ENCODE measurements at regions of chr4 and their contacts with region 1.

Region 1: DNA sequence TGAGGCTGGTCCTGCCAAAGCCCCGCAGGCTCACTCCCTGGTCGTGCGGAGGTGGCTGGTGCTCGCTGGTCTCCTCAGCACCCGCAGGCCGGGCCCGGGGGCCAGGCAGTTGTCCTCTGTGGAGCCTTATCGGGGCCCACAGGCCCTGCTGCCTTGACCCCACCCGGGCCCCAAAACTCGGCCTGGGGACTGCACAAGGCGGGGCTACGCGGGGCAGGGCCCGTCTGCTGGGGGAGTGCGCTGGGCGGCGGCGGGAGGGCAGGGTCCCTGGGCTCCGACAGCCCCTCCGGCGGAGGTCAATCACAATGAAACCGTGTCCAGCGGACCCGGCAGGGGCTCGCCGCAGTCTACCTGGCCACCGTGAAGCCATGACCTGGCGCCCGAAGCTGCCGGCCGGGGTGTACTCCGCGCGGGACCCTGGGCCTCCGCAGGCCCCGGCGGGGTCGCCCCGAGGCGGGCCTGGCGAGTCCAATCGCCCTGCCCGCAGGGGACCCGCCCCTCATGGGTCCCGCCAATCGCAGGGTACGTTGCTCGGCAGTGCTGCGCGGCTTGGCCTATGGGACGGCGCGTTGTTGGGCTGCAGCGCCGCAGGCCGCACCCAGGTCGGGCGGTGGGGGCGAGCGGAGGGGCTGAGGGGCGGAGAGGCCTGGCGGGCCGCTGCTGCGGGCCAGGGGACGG is at the start of gene ADD1:
- DNase-seq: peak; percentile 97
- H3K4me3 Mint-ChIP-seq: peak within 1 kb of the TSS; percentile 89
- H3K27ac Mint-ChIP-seq: peak within 1 kb of the TSS; percentile 82
- H3K4me1 Mint-ChIP-seq: peaks cover 51% of the 10 kb centered on the region
- H3K27me3 Mint-ChIP-seq: no peaks in the 10 kb centered on the region
- total RNA-seq, gene ADD1: 212 TPM

Region 2: GRCh38 chr4:2798399-2799223 is 44.8 kb before region 1 on chr4:
- CTCF ChIA-PET with region 1: no interaction called
- POLR2A ChIA-PET with region 1: interaction called, 3 read pairs
- intact Hi-C with region 1: loop called (anchors 5 kb)
- DNase-seq: peak; percentile 78
- H3K4me3 Mint-ChIP-seq: peak overlapping the region; percentile 73
- H3K27ac Mint-ChIP-seq: peak overlapping the region; percentile 83
- H3K4me1 Mint-ChIP-seq: peaks cover 61% of the 10 kb centered on the region
- H3K27me3 Mint-ChIP-seq: no peaks in the 10 kb centered on the region

Region 3: DNA sequence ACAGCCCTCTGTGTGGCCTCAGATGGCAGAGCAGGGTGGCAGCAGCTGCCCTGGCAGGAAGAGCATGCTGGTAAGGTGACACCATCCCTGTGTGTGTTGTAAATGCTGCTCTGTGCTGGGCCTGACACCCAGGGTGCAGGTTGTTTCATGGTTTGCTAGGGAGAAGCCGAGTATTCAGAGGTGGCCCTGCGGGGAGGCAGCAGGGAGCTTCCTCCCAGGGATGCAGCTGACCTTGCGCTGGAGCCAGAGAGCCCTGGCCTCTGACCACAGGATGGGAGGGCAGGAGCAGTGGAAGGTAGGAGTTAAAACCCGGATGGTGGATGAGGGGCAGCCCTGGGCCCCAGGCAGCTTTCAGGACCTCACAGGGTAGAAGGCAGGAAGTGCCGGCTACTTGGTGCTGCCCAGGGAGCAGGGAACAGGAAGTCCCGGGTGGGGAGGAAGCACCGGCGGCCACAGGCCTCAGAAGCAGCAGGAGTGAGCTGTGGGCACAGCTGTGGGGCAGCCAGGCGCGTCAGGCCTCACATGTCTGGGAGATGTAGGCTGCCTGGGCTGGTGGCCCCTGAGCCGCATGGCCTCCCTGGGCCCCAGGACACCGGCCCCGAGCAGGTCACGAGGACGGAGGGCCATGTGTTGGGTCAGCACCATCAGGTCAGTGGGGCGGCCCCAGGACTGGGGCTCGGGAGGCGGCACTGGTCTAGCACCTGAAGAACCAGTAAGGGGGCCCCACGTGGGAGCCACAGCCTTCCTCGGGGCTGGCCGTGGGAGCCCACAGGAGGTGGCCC is 31.4 kb before region 1 on chr4:
- CTCF ChIA-PET with region 1: interaction called, 3 read pairs
- POLR2A ChIA-PET with region 1: no interaction called
- intact Hi-C with region 1: loop called (anchors 2 kb)
- DNase-seq: peak; percentile 81
- H3K4me3 Mint-ChIP-seq: peak overlapping the region; percentile 79
- H3K27ac Mint-ChIP-seq: peak overlapping the region; percentile 95
- H3K4me1 Mint-ChIP-seq: peaks cover 48% of the 10 kb centered on the region
- H3K27me3 Mint-ChIP-seq: no peaks in the 10 kb centered on the region

Region 4: GRCh38 chr4:2878346-2878745 is 34.9 kb after region 1 on chr4:
- CTCF ChIA-PET with region 1: no interaction called
- POLR2A ChIA-PET with region 1: interaction called, 6 read pairs
- intact Hi-C with region 1: loop called (anchors 1 kb)
- DNase-seq: peak; percentile 67
- H3K4me3 Mint-ChIP-seq: no peak overlapping the region
- H3K27ac Mint-ChIP-seq: peak overlapping the region; percentile 76
- H3K4me1 Mint-ChIP-seq: peaks cover 35% of the 10 kb centered on the region
- H3K27me3 Mint-ChIP-seq: no peaks in the 10 kb centered on the region

Region 5: GRCh38 chr4:2934813-2935761 is 91.7 kb after region 1 on chr4:
- CTCF ChIA-PET with region 1: no interaction called
- POLR2A ChIA-PET with region 1: interaction called, 23 read pairs
- intact Hi-C with region 1: loop called (anchors 2 kb)
- DNase-seq: peak; percentile 97
- H3K4me3 Mint-ChIP-seq: peak overlapping the region; percentile 93
- H3K27ac Mint-ChIP-seq: peak overlapping the region; percentile 95
- H3K4me1 Mint-ChIP-seq: peaks cover 53% of the 10 kb centered on the region
- H3K27me3 Mint-ChIP-seq: no peaks in the 10 kb centered on the region

Region 6: DNA sequence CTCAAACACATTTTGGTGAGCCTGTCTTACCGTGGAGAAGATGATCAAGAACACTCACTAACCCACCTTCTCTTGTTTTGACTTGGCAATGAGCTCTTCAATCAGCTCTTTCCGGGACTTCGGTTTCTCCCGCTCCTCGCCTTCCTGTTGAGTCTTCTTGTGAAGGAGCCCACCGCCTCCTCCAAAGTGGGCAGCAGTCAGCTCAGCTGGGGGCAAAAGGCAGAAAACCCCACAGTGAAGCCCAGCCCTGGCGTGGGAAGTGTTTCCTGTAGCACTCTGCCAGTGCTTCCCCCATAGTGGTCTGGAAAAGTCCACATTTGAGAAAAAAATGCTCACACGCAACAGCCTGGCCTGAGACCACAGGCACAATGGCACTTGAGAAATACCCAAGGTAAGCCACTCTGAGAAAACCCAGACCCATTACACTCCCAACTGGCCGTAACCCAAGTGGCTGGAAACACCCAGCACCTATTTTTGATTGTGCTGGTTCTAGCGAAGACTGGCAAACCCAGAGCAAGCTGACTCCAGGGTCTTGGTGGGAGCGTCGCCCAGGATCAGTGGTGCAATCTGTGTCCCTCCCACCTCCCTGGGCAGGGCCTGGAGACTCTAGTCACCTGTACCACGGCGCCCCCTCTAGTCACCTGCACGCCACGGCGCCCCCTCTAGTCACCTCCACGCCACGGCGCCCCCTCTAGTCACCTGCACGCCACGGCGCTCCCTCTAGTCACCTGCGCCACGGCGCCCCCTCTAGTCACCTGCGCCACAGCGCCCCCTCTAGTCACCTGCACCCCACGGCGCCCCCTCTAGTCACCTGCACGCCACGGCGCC is 111.2 kb after region 1 on chr4:
- CTCF ChIA-PET with region 1: interaction called, 4 read pairs
- POLR2A ChIA-PET with region 1: interaction called, 4 read pairs
- intact Hi-C with region 1: loop called (anchors 1 kb)
- DNase-seq: peak; percentile 92
- H3K4me3 Mint-ChIP-seq: peak overlapping the region; percentile 61
- H3K27ac Mint-ChIP-seq: peak overlapping the region; percentile 99
- H3K4me1 Mint-ChIP-seq: peaks cover 75% of the 10 kb centered on the region
- H3K27me3 Mint-ChIP-seq: no peaks in the 10 kb centered on the region

Measured in activated CD4-positive, alpha-beta memory T cell treated with anti-CD3 and anti-CD28 coated beads for 36 hours (primary cell).